CD4-positive, alpha-beta memory T cell (primary cell): ENCODE measurements at regions of chr7 and their contacts with region 1.

Region 1: DNA sequence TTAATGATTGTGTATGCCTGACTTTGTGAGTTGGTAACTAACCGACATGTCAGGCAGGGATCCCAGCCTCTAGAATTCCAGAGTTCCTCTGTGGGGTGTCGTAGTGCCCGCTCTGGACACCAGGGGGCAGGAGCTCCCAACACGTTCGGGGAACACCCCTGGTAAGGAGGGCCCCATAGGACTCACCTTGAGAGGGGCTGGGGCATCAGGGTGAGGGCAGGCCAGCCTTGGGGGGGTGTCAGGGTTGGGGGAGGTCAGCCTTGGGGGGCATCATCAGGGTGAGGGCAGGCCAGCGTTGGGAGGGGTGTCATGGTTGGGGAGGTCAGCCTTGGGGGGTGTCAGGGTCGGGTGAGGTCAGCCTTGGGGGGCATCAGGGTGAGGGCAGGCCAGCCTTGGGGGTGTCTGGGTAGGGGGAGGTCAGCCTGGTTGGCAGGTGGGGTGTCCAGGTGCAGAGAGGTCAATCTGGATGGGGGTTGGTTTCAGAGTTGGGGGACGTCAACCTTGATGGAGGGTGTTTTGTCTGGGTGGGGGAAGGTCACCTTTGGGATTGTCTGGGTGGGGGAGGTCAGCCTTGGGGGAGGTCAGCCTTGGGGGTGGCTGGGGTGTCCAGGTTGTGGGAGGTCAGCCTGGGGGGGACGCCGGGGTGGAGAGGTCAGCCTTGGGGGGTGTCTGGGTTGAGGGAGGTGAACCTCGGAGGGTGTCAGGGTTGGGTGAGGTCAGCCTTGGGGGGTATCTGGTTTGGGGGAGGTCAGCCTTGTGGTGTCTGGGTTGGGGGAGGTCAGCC is 45.6 kb upstream of the SUN1 start:
- DNase-seq: peak; percentile 60 to 64 (median 61)
- H3K4me3 ChIP-seq: no peak overlapping the region
- H3K4me3 Mint-ChIP-seq: no peak overlapping the region
- H3K27ac ChIP-seq: no peak overlapping the region
- H3K27ac Mint-ChIP-seq: peak overlapping the region in 1 of 7 donors; percentile 32
- H3K4me1 ChIP-seq: no peaks in the 10 kb centered on the region
- H3K4me1 Mint-ChIP-seq: peaks cover 0 to 5% (median under 1%) of the 10 kb centered on the region in 4 donors
- H3K27me3 ChIP-seq: no peaks in the 10 kb centered on the region
- H3K27me3 Mint-ChIP-seq: no peaks in the 10 kb centered on the region

Region 2: DNA sequence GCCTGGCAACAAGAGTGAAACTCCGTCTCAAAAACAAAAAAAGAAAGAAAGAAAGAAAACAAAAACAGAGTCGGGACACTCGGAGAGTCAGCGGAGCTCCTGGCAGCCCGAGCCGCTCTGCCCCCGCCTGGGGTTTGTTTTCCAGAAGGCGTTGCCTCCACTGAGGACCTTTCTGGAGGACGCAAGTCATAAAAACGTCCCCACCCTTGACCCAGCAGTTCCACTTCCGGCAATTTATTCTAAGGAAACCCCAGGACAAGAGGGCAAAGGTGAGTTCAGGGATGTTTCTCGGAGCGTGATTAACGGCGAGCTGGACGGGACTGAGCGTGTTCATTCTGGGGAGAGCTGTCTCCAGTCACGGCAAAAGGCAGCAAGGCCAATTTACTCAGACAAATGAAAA is 18.6 kb after region 1 on chr7:
- CTCF ChIA-PET with region 1: no interaction called
- POLR2A ChIA-PET with region 1: no interaction called
- intact Hi-C with region 1: no loop called
- DNase-seq: no peak
- H3K4me3 ChIP-seq: no peak overlapping the region
- H3K4me3 Mint-ChIP-seq: no peak overlapping the region
- H3K27ac ChIP-seq: no peak overlapping the region
- H3K27ac Mint-ChIP-seq: no peak overlapping the region
- H3K4me1 ChIP-seq: no peaks in the 10 kb centered on the region
- H3K4me1 Mint-ChIP-seq: no peaks in the 10 kb centered on the region
- H3K27me3 ChIP-seq: no peaks in the 10 kb centered on the region
- H3K27me3 Mint-ChIP-seq: no peaks in the 10 kb centered on the region

Region 3: GRCh38 chr7:831596-832166 is 45.0 kb after region 1 on chr7:
- CTCF ChIA-PET with region 1: interaction called, 3 read pairs
- POLR2A ChIA-PET with region 1: interaction called, 8 read pairs
- intact Hi-C with region 1: loop called (anchors 1 kb)
- DNase-seq: peak in 4 of 5 donors; percentile 39 to 58 (median 47)
- H3K4me3 ChIP-seq: peak overlapping the region in 1 of 2 donors; percentile 8
- H3K4me3 Mint-ChIP-seq: peak overlapping the region; percentile 81 to 91 (median 88)
- H3K27ac ChIP-seq: peak overlapping the region; percentile 73
- H3K27ac Mint-ChIP-seq: peak overlapping the region; percentile 96 to 99 (median 97)
- H3K4me1 ChIP-seq: peaks cover 41% of the 10 kb centered on the region
- H3K4me1 Mint-ChIP-seq: peaks cover 33 to 72% (median 49%) of the 10 kb centered on the region in 4 donors
- H3K27me3 ChIP-seq: no peaks in the 10 kb centered on the region
- H3K27me3 Mint-ChIP-seq: no peaks in the 10 kb centered on the region

Region 4: GRCh38 chr7:954330-955238 is 167.9 kb after region 1 on chr7 and contains the start of gene ADAP1:
- CTCF ChIA-PET with region 1: no interaction called
- POLR2A ChIA-PET with region 1: no interaction called
- intact Hi-C with region 1: loop called (anchors 5 kb)
- DNase-seq: peak in 4 of 5 donors; percentile 55 to 64 (median 60)
- H3K4me3 ChIP-seq: no peak within 1 kb of the TSS
- H3K4me3 Mint-ChIP-seq: peak within 1 kb of the TSS; percentile 62 to 80 (median 72)
- H3K27ac ChIP-seq: no peak within 1 kb of the TSS
- H3K27ac Mint-ChIP-seq: peak within 1 kb of the TSS in 2 of 7 donors; percentile 69 to 83
- H3K4me1 ChIP-seq: peaks cover 5% of the 10 kb centered on the region
- H3K4me1 Mint-ChIP-seq: peaks cover 0 to 9% (median 0%) of the 10 kb centered on the region in 4 donors
- H3K27me3 ChIP-seq: no peaks in the 10 kb centered on the region
- H3K27me3 Mint-ChIP-seq: peaks cover 2 to 4% of the 10 kb centered on the region in 2 donors
- total RNA-seq, gene ADAP1: 9.7 to 10.0 TPM